H1 (cell line): ENCODE measurements at regions of chr22 and their contacts with region 1.

Region 1: DNA sequence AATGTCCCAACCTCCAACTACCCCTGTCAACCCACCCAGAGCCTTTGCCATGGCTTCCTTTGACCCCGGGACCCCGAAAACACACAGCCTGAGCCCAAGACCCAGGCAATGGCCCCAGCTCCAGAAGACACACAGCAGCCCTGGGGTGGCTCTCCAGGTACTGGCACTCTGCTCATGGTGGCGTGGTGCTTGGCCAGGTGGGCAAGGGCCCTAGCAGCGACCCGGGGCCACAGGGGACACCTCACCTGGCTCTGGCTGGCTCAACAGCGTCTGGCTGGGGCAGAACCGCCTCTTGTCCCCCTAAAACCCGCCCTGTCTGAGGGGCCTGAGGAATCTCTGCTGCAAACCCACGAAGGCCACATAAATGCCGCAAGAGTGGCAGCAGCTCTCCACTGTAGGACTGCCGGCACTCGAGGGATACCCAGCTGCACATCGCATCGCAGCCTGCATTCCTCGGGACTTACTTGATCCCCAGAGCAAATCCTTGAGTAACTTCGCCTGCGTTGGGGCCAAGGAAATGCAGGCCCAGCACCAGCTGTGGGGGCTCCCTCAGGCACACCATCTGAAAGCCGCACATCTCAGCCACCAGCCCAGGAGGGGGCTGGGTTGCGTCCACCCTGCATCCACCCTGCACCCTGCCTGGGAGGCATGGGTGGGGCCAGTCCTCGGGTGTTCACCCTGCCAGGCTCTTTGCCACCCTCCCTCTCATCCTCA is 23.1 kb upstream of the GNB1L start:
- DNase-seq: peak in 1 of 2 experiments; percentile 39
- H3K4me3 ChIP-seq: no peak overlapping the region
- H3K27ac ChIP-seq: no peak overlapping the region
- H3K4me1 ChIP-seq: peaks cover 11 to 26% (median 20%) of the 10 kb centered on the region in 4 experiments
- H3K27me3 ChIP-seq: peaks cover 0 to 3% (median 0%) of the 10 kb centered on the region in 4 experiments; a peak in 1 of 7 replicates
- CTCF ChIP-seq: no peak
- EP300 ChIP-seq: no peak
- POLR2A ChIP-seq: no peak
- RAD21 ChIP-seq: no peak

Region 2: DNA sequence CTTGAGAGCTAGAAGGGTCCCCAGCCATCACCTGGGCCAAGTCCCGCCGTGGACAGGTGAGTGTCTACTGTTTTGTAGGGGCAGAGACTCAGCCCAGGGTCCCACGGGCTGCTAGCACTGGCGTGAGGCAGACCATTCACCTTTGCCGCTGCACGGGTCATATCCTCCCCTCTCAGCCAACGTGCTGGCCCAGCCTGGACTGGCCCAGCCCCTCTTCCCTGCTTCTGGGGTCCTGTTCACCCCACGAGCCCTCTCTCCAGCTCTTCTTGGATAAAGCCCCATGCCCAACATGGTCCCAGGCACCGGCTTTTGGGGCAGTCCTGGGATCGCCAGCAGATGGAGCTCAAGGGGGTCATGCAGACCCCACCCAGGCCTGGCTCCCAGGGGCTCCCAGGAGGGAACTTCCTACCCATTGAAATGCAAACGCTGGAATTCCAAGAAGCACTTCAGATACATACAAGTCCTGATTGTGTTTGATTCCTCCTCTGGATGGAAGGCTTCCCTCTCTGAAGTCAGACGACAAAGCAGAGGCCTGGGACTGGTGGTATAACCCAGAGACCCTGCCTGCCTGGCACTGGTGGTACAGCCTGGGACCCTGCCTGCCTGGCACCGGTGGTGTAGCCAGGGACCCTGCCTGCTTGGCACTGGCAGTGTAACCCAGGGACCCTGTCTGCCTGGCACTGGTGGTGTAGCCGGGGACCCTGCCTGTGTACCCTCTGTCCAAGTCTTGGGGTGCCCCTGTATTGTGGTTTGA is 172.4 kb before region 1 on chr22:
- CTCF ChIA-PET with region 1: no interaction called
- POLR2A ChIA-PET with region 1: no interaction called
- DNase-seq: peak; percentile 90 to 91
- H3K4me3 ChIP-seq: no peak overlapping the region
- H3K27ac ChIP-seq: peak overlapping the region; percentile 46; the same call in 1 of the 2 replicates
- H3K4me1 ChIP-seq: peaks cover 0 to 24% (median 16%) of the 10 kb centered on the region in 4 experiments; a peak in 6 of 7 replicates
- H3K27me3 ChIP-seq: peaks cover 0 to 8% (median 7%) of the 10 kb centered on the region in 4 experiments; a peak in 4 of 7 replicates
- CTCF ChIP-seq: peak; percentile 71 to 83 (median 72)
- EP300 ChIP-seq: peak in 1 of 2 experiments; percentile 94; a peak in 2 of 3 replicates
- POLR2A ChIP-seq: no peak
- RAD21 ChIP-seq: peak; percentile 33 to 58

Region 3: DNA sequence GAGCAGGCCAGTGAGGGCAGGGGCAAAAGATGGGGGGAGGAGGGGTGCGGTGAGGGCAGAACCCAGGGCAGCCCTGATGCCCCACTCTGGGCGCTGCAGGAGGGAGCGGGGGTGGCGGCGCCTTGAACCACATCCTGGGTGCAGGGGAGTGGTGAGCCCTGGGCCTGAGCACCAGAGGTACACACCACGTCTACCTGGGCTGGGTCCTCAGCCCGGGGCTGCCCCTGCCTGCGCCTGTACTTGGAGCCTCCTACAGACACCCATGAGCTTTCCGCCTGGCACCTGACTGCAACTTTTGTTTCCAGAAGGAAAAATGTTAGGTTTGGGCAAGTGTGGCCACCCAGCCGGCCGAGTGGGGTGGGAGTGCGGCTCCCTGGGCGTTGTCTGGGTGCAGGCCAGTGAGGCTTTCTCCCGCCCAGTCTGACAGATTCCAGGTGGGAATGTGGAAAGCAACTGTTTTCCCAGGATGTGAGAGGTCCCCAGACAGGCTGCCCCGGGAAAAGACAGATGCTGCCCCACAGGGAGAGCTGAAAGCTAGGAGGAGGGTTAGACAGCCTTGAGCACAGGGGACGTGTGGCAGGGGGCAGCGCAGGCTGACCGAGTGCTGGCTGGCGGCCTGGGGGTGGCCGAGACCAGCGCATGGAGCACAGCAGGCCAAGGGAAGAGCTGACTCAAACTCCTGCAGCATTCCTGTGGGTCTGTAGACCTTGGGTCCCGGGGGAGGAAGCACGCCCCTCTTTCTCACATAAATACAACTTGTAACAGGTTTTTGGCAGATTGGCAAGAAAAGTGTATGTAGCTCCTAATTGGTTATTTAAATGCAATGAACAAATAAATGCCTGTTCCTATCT is 67.2 kb before region 1 on chr22:
- CTCF ChIA-PET with region 1: no interaction called
- POLR2A ChIA-PET with region 1: no interaction called
- DNase-seq: no peak
- H3K4me3 ChIP-seq: no peak overlapping the region
- H3K27ac ChIP-seq: no peak overlapping the region
- H3K4me1 ChIP-seq: no peaks in the 10 kb centered on the region; a peak in 1 of 7 replicates
- H3K27me3 ChIP-seq: no peaks in the 10 kb centered on the region
- CTCF ChIP-seq: no peak
- EP300 ChIP-seq: no peak
- POLR2A ChIP-seq: no peak
- RAD21 ChIP-seq: no peak; a peak in 2 of 4 replicates

Region 4: DNA sequence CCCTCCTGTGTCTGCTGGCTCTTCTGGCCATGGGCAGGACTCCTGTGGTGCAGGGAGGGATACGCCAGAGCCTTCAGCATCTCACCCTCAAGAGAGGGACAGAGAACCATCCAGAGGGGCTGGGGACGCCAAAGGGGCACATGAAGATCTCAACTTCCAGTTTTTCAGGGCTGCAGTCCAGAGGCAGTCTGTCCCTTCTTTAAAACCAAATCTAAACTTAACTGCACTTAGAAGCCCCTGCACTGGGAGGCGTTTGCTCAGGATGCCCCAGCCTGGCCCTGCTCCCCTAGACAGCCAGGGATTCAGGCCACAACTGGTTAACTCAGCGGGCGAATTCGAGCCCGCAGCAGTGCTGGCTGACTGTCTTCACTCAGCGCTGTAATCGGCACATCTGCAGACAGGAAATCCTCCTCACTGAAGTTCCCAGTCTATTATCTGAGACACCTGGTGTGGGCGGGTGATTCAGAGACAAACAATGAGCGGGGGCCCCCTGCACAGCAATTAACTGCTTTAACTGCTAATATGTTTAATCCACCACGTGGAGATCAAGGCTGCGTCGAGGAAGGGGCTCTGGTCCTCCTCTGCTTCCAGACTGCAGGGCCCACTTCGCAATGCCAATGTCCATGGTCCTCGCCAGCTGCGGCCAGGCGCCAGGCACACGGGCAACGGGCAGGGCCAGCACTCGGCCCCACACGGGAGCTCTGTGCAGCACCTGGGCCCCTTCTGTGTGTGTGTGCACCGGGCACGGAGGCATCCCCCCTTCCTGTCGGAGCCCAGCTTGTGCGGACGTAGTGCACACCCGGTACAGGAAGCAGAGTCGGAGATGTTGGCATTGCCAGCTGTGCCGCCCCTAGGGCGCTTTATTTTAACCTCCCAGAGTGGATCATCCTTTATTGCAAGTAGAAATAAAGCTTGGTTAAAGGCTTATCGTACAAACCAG is 13.8 kb after region 1 on chr22:
- CTCF ChIA-PET with region 1: interaction called, 12 read pairs
- POLR2A ChIA-PET with region 1: interaction called, 6 read pairs
- DNase-seq: peak in 1 of 2 experiments; percentile 78
- H3K4me3 ChIP-seq: no peak overlapping the region
- H3K27ac ChIP-seq: no peak overlapping the region
- H3K4me1 ChIP-seq: peaks cover 7 to 20% (median 18%) of the 10 kb centered on the region in 4 experiments
- H3K27me3 ChIP-seq: peaks cover 0 to 2% (median 0%) of the 10 kb centered on the region in 4 experiments; a peak in 4 of 7 replicates
- CTCF ChIP-seq: peak in 1 of 3 experiments; percentile 5; a peak in 2 of 4 replicates
- EP300 ChIP-seq: peak in 1 of 2 experiments; percentile 76; a peak in 1 of 3 replicates
- POLR2A ChIP-seq: 0 out of 3 replicates have a peak, but pooled peaks of 1 of the 2 experiments have one; percentile 48
- RAD21 ChIP-seq: peak in 1 of 2 experiments; percentile 21; a peak in 1 of 4 replicates

Region 5: GRCh38 chr22:19896665-19897355 is 19.0 kb after region 1 on chr22:
- CTCF ChIA-PET with region 1: interaction called, 10 read pairs
- POLR2A ChIA-PET with region 1: interaction called, 9 read pairs
- DNase-seq: no peak
- H3K4me3 ChIP-seq: no peak overlapping the region
- H3K27ac ChIP-seq: no peak overlapping the region
- H3K4me1 ChIP-seq: peaks cover 5 to 7% (median 6%) of the 10 kb centered on the region in 4 experiments
- H3K27me3 ChIP-seq: no peaks in the 10 kb centered on the region; a peak in 2 of 7 replicates
- CTCF ChIP-seq: no peak
- EP300 ChIP-seq: no peak
- POLR2A ChIP-seq: no peak
- RAD21 ChIP-seq: no peak